AG04449 (cell line): ENCODE measurements at regions of chr1 and their contacts with region 1.

Region 1: DNA sequence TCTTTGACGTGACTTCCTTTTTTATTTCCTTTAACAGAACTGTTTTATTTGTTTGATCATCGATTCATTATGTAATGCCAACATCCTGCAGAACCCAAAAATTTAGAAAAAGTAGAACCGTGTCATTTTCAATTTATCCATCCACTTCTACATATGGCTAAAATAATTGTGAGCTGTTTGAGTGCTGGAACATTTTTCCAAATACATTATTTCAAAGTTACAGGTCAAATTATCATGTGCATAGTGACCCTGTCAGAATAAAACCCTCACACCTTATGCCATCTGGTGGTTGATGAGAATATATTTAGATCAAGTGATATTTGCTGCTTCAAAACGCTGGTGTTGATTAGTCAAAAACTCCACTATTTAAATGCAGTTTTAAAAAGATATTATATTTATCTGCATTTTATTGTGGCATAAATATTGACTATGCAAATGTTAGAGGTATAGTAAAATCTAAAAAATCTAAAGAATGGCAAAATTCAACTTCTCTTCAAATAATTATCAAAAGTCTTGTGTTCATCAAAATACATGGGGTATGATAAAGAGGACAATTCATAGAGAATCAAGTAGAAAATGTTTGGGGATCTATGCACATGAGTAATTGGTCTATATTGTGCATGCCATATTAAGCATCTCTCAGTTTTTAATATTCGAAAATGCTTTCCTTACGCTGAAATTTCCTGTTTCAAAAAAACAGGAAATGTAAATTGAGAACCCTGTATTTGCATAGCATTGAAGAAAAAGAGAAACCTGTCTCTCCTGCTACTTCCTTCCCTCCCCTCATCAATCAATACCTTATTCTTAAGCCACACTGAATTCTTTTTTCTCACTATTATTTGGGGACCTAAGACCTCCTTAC is 39.7 kb downstream of the UBE2U start:
- DNase-seq: no peak
- H3K4me3 ChIP-seq: no peak overlapping the region
- CTCF ChIP-seq: peak; percentile 20

Region 2: GRCh38 chr1:63557365-63557987 is 685.6 kb before region 1 on chr1:
- CTCF ChIA-PET with region 1: interaction called, 154 read pairs
- POLR2A ChIA-PET with region 1: no interaction called
- DNase-seq: no peak
- H3K4me3 ChIP-seq: no peak overlapping the region
- CTCF ChIP-seq: peak; percentile 50

Region 3: DNA sequence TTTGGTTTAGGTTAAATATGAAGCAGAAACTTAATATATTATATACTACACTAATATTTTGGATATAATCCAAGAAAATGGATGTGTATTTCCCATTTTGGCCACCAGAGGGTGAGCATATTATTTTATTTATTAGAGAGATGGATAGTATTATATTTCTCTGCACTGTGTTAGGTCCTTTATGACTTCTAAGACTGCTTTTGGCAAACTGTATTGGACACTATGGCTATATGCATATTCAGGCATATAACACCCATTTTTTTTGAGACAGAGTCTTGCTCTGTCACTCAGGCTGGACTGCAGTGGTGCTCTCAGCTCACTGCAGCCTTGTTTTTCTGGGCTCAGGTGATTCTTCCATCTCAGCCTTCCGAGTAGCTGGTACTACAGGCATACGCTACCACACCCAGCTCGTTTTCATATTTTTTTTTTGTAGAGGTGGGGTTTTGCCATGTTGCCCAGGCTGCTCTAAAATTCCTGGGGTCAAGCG is 667.7 kb before region 1 on chr1:
- CTCF ChIA-PET with region 1: interaction called, 34 read pairs
- POLR2A ChIA-PET with region 1: no interaction called
- DNase-seq: no peak
- H3K4me3 ChIP-seq: no peak overlapping the region
- CTCF ChIP-seq: peak; percentile 8

Region 4: DNA sequence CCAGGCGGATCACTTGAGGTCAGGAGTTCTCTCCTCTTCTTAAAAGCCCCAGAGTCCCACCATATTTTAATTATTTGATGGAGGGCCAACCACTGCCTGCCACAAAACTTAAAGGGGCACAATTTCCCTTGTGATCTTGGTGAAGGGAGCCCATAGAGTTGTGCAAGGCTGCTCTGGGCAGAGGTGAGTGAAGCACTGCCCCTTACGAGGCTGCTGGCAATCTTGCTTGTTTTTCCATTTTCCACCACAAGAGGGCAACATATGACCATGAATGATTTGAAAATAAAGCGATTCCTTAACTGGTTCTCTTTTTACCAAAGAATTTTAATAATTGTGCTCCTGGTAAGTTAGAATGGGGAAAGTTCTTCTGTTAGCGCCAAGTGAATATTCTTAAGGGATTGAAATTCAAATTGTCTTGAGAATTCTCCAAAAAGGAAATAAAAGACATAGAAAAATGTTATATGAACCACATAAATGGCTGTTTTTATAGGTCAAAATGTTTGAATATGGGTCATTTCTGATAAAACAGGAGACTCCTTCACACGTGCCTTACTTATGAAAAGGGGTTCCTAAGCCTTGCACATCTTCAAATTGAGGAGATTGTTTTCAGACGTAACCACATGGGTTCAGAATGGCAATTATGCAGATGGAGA is 627.2 kb before region 1 on chr1:
- CTCF ChIA-PET with region 1: interaction called, 275 read pairs
- POLR2A ChIA-PET with region 1: no interaction called
- DNase-seq: no peak
- H3K4me3 ChIP-seq: no peak overlapping the region
- CTCF ChIP-seq: peak; percentile 40

Region 5: GRCh38 chr1:63917571-63918417 is 325.3 kb before region 1 on chr1:
- CTCF ChIA-PET with region 1: interaction called, 13 read pairs
- POLR2A ChIA-PET with region 1: no interaction called
- DNase-seq: no peak
- H3K4me3 ChIP-seq: no peak overlapping the region
- CTCF ChIP-seq: no peak

Region 6: DNA sequence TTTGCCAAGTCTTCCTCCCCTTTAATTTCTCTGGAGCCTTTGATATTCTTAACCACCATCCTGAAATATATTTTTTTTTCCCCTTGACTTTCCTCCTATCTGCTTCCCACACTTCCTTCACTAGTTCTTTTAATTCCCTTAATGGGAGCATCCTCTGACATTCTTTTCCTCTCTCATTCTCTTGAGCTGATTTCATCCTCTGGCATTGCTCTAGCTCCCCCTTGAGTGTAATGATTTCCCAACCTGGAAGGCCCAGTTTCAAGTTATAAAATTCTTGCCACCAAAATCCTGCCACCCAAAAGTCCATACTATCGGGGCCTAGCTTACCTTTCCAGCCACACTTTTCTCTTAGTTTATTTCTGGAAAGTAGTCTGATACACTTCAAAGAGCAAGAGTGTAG is 79.2 kb before region 1 on chr1:
- CTCF ChIA-PET with region 1: interaction called, 13 read pairs
- POLR2A ChIA-PET with region 1: no interaction called
- DNase-seq: no peak
- H3K4me3 ChIP-seq: no peak overlapping the region
- CTCF ChIP-seq: peak; percentile 58

Region 7: GRCh38 chr1:64327119-64327518 is 84.0 kb after region 1 on chr1:
- CTCF ChIA-PET with region 1: no interaction called
- POLR2A ChIA-PET with region 1: no interaction called
- DNase-seq: no peak
- H3K4me3 ChIP-seq: no peak overlapping the region
- CTCF ChIP-seq: no peak